WTC11 (cell line): ENCODE measurements at regions of chr1 and their contacts with region 1.

Region 1: GRCh38 chr1:110780600-110781484 is 92.1 kb upstream of the CD53 start:
- DNase-seq: peak; percentile 79
- ATAC-seq: peak; percentile 87
- H3K4me3 Mint-ChIP-seq: peak overlapping the region; percentile 74
- H3K27ac Mint-ChIP-seq: no peak overlapping the region
- H3K4me1 Mint-ChIP-seq: peaks cover 11% of the 10 kb centered on the region
- H3K27me3 Mint-ChIP-seq: peaks cover 39% of the 10 kb centered on the region
- CTCF ChIP-seq: peak; percentile 91

Region 2: DNA sequence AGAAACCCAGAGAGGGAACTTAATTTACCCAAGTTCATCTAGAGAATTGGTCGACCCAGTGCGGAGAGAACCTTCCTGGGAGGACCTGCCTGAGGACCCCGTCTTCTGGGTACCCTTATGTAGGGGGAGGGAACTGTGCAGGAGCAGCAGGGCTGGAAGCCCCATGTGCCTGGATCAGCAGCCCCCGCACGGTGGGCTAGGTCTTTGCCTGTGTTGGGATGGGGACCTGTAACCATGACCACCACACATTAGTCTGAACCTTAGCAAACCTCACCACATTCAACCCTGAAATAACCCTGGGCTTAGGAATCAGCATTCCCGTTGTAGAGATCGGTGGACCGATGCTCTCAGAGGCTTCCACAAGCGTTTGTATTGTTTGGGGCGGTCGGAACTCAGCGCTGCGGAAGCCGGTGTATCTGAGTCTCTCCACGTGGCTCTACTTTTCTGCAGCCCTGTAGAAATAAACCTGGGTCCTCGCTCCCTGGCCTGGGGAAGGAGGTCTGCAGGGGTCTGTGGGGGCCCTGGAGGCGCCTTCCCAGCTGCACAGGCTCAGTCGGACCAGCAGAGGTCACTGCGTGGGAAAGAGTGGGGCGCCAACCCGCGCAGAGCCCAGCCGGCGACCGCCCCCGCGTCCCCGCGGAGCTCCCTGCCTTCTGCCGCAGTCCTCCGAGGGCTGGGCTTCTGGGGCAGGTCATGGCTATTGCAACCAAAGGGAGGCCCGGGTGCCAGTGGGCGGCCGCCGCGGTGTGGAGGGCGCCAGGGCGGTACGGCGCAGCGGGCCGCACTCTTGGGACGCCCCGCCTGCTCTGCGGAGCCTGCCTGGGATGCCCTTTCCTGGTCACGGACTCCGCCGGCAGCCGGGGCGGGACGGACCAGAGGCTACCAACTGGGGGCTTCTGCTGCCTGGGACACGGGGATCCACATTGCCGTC is 225.7 kb before region 1 on chr1:
- CTCF ChIA-PET with region 1: interaction called, 19 read pairs
- POLR2A ChIA-PET with region 1: no interaction called
- DNase-seq: peak; percentile 73
- ATAC-seq: peak; percentile 88
- H3K4me3 Mint-ChIP-seq: peak overlapping the region; percentile 66
- H3K27ac Mint-ChIP-seq: no peak overlapping the region
- H3K4me1 Mint-ChIP-seq: peaks cover 8% of the 10 kb centered on the region
- H3K27me3 Mint-ChIP-seq: peaks cover 65% of the 10 kb centered on the region
- CTCF ChIP-seq: peak; percentile 59

Region 3: GRCh38 chr1:110619412-110620249 is 161.2 kb before region 1 on chr1:
- CTCF ChIA-PET with region 1: interaction called, 135 read pairs
- POLR2A ChIA-PET with region 1: no interaction called
- DNase-seq: peak; percentile 89
- ATAC-seq: peak; percentile 85
- H3K4me3 Mint-ChIP-seq: peak overlapping the region; percentile 59
- H3K27ac Mint-ChIP-seq: no peak overlapping the region
- H3K4me1 Mint-ChIP-seq: peaks cover 6% of the 10 kb centered on the region; the same call in 1 of the 2 replicates
- H3K27me3 Mint-ChIP-seq: peaks cover 39% of the 10 kb centered on the region
- CTCF ChIP-seq: peak; percentile 97

Region 4: DNA sequence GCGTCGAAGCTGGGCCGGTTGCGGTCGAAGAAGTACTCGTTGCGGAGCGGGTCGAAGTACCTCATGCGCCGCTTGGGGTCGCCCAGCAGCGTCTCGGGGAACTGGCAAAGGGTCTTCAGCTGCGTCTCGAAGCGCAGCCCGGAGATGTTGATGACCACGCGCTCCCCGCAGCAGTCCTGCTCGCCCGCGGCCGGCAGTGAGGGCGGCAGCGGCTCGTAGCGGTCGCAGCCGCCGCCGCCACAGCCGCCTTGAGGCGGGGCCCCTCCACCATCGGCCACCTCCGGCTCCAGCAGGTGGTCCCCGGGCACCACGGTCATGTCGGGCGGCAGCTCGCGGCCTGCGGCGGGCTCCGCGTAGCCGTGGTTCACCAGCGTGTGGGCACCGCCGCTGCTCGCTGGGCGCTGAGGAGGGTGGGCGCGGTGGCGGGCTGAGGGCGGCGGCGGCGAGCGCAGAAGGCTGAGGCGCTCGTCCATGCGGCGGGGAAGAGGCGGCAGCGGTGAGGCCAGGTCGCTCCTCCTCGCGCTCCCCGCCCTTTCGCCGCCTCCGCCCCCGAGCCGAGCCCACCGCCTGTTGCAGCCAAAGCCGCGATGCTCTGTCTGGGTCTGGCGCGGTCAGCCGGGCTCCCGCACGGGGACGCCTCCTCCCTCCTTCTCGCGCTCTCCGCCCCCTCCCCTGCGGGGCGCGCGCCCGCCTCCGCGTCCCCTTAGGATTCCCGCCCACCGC is 106.3 kb before region 1 on chr1 and contains the start of gene KCNA3:
- CTCF ChIA-PET with region 1: interaction called, 11 read pairs
- POLR2A ChIA-PET with region 1: no interaction called
- DNase-seq: peak; percentile 84
- ATAC-seq: peak; percentile 86
- H3K4me3 Mint-ChIP-seq: peak within 1 kb of the TSS; percentile 71
- H3K27ac Mint-ChIP-seq: no peak within 1 kb of the TSS
- H3K4me1 Mint-ChIP-seq: peaks cover 11% of the 10 kb centered on the region
- H3K27me3 Mint-ChIP-seq: peaks cover 88% of the 10 kb centered on the region
- CTCF ChIP-seq: no peak
- total RNA-seq, gene KCNA3: 1.1 to 1.2 TPM (median 1.2 TPM) in 3 replicates

Region 5: DNA sequence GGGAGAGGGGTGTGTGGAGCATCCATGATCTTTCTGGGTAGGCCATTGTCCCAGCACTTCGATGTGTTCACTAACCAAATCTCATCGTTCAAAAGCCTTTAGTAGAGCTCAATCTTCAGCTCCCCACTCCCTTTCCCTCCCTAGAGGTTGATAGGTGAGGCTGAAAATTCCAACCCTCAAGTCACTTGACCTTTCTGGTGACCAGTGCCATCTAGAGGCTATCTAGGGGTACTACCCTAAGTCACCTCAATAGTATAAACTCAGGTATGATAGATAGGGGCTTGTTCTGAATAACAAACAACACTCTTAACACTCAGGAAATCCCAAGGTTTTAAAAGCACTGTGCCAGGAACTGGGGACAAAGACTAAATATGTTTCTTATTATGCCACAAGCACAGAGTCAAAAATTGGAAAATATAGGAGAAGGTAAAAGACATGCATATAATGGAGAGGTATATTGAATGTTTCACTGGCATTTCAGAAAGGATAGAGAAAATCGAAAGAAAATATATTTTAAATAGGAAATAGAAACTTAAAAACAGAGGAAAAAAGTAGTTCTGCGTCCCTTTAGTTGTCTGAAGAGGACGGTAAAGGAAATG is 49.2 kb after region 1 on chr1:
- CTCF ChIA-PET with region 1: interaction called, 29 read pairs
- POLR2A ChIA-PET with region 1: no interaction called
- DNase-seq: peak; percentile 16
- ATAC-seq: peak; percentile 100
- H3K4me3 Mint-ChIP-seq: no peak overlapping the region
- H3K27ac Mint-ChIP-seq: no peak overlapping the region
- H3K4me1 Mint-ChIP-seq: peaks cover 4% of the 10 kb centered on the region
- H3K27me3 Mint-ChIP-seq: peaks cover 9% of the 10 kb centered on the region; the same call in 1 of the 2 replicates
- CTCF ChIP-seq: peak; percentile 69